Activated CD4-positive, alpha-beta T cell treated with anti-CD3 and anti-CD28 coated beads for 36 hours (primary cell): ENCODE measurements at regions of chr5 and their contacts with region 1.

Region 1: DNA sequence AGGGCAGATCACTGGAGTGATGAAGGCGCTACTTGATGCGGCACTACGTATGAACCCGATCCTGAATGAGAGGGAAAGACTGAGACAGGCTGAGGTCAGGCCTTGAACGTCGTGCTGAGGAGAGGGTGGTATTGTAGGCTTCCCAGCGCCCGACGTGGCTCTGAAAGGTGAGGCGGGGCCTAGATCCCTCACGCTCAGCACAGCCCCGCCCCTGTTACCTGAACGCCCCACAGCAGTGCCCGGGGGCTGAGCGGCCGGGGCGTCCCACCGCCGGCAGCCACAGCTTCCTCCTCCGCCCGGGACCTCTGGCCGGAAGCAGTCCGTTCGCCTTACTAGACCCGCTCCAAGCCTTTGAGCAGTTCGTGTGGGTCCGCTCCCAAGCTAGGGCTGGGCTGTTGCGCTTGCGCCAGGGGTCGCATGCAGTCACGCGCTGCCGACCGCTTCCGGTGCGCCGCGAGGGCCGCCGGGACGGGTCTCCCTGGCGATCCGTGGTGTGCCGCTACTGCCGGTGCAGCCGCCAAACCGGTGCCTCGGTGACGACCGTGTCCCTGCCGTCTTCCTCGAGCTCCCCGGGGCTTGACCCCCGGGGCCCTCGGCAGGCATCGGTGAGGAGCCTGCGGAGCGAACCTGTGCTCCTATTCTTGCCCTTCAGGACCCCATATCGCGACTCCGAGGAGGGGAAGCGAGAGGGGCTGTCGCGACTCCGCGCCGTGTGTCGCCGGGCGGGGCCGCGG is at the starts of genes HMGXB3 and TIGD6:
- DNase-seq: peak; percentile 93
- ATAC-seq: peak; percentile 80
- H3K4me3 Mint-ChIP-seq: peak within 1 kb of the TSS; percentile 86
- H3K27ac Mint-ChIP-seq: peak within 1 kb of the TSS; percentile 94
- H3K4me1 Mint-ChIP-seq: peaks cover 37% of the 10 kb centered on the region
- H3K27me3 Mint-ChIP-seq: no peaks in the 10 kb centered on the region
- total RNA-seq, gene HMGXB3: 27.2 to 30.5 TPM
- total RNA-seq, gene TIGD6: 2.5 to 2.6 TPM

Region 2: DNA sequence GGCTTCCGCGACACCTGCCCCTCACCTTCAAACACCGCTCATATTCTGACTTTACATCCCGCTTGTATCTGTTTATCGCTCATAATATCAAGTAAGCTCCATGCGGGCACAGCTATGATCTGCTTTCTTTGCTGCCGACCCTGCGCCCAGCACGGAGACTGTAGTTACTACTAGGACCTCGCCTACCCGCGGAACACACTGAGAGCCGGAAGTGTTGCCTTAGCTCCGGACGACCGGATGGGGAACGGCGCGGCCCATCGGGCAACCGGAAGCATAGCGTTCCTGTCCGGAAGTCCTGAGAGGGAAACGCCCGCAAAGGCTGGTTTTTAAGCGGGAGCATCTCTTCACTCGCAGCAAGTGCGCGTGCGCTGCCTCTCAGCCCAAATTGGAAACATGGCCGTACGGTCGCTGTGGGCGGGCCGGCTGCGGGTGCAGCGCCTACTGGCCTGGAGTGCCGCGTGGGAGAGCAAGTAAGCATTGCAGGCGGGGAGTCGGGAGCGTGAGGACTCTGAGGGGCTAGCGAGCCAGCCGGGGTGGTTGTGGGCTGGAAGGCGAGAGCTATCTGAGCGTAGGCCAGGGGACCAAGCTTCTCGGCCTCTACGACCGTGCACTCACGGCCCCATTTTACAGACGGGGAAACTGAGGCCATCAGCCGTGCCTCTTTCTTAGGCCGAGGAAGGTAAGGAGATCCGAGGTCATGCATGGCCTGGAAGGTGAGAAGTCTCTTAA is 655.1 kb before region 1 on chr5 and contains the start of gene GRPEL2:
- CTCF ChIA-PET with region 1: no interaction called
- POLR2A ChIA-PET with region 1: no interaction called
- intact Hi-C with region 1: loop called in 1 of 2 experiments (anchors 1 kb)
- DNase-seq: peak; percentile 97
- ATAC-seq: peak; percentile 89
- H3K4me3 Mint-ChIP-seq: peak within 1 kb of the TSS; percentile 96
- H3K27ac Mint-ChIP-seq: peak within 1 kb of the TSS; percentile 99
- H3K4me1 Mint-ChIP-seq: peaks cover 49% of the 10 kb centered on the region
- H3K27me3 Mint-ChIP-seq: no peaks in the 10 kb centered on the region
- total RNA-seq, gene GRPEL2: 27.1 to 37.2 TPM

Region 3: GRCh38 chr5:149731639-149732323 is 268.6 kb before region 1 on chr5:
- CTCF ChIA-PET with region 1: no interaction called
- POLR2A ChIA-PET with region 1: no interaction called
- intact Hi-C with region 1: loop called in 1 of 2 experiments (anchors 1 kb)
- DNase-seq: peak; percentile 90
- ATAC-seq: peak; percentile 48
- H3K4me3 Mint-ChIP-seq: peak overlapping the region; percentile 79
- H3K27ac Mint-ChIP-seq: no peak overlapping the region
- H3K4me1 Mint-ChIP-seq: peaks cover 2% of the 10 kb centered on the region
- H3K27me3 Mint-ChIP-seq: no peaks in the 10 kb centered on the region

Region 4: GRCh38 chr5:150217873-150218692 is 217.7 kb after region 1 on chr5:
- CTCF ChIA-PET with region 1: no interaction called
- POLR2A ChIA-PET with region 1: no interaction called
- intact Hi-C with region 1: loop called (anchors 5 kb)
- DNase-seq: peak; percentile 89
- ATAC-seq: peak; percentile 97
- H3K4me3 Mint-ChIP-seq: no peak overlapping the region
- H3K27ac Mint-ChIP-seq: no peak overlapping the region
- H3K4me1 Mint-ChIP-seq: no peaks in the 10 kb centered on the region
- H3K27me3 Mint-ChIP-seq: peaks cover 3% of the 10 kb centered on the region

Region 5: GRCh38 chr5:150409638-150410523 is 409.5 kb after region 1 on chr5:
- CTCF ChIA-PET with region 1: no interaction called
- POLR2A ChIA-PET with region 1: no interaction called
- intact Hi-C with region 1: loop called (anchors 2 kb)
- DNase-seq: peak; percentile 66
- ATAC-seq: peak; percentile 40
- H3K4me3 Mint-ChIP-seq: peak overlapping the region; percentile 99
- H3K27ac Mint-ChIP-seq: peak overlapping the region; percentile 99
- H3K4me1 Mint-ChIP-seq: peaks cover 36% of the 10 kb centered on the region
- H3K27me3 Mint-ChIP-seq: no peaks in the 10 kb centered on the region